Left ventricle myocardium superior (tissue), 1 donor: ENCODE measurements at regions of chr2 and their contacts with region 1.

Region 1: GRCh38 chr2:54704688-54705605 is 18.5 kb upstream of the EML6 start:
- DNase-seq: no peak
- ATAC-seq: peak; percentile 53

Region 2: GRCh38 chr2:54115284-54116137 is 589.4 kb before region 1 on chr2 and contains the start of gene ACYP2:
- intact Hi-C with region 1: loop called (anchors 10 kb)
- DNase-seq: peak; percentile 98
- ATAC-seq: peak; percentile 99
- total RNA-seq, gene ACYP2: 60.3 TPM

Region 3: GRCh38 chr2:54176577-54176976 is 528.4 kb before region 1 on chr2:
- intact Hi-C with region 1: loop called (anchors 10 kb)
- DNase-seq: peak; percentile 62
- ATAC-seq: peak; percentile 83